Thyroid gland (tissue), 4 donors: ENCODE measurements at regions of chr19 and their contacts with region 1.

Region 1: DNA sequence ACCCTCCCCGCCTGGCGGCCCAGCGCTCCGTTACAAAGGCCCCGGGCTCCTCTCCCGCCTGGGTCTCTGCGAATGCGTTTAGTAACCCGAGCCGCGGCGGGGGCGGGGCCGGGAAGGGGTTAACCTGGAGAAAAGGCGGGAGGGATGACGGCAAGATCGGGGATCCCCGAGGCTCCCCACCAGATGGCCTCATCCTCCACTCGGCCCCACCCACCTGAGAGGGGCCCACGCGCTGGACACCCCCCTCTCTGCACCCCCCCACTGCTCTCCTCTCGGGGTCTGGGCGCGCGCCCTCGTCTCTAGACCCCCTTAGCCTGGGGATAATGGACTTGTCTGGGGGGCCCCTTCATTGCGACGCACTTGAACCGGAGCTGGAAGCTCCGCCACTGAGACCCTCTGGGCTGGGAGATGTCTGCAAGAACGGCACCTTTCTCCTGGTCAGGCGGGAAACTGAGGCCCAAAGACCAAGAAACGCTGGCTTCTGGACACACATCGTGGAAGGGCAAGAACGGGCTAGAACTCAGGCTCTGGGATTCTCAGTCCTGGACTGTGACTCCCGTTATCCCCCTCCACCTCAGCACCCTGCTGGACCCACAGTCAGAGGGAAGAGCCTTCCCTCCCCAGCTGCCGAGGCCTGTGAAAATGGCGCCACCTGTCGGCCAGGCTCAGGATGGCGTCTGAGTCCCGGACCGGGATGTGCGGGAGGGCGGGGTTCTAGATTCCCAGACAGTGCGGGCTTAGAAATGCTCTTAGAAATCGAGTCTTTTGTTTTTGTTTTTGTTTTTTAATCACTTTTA is 2.9 kb upstream of the LTBP4 start:
- DNase-seq: peak; percentile 82 to 86
- H3K4me3 ChIP-seq: no peak overlapping the region
- H3K27ac ChIP-seq: no peak overlapping the region
- H3K4me1 ChIP-seq: peaks cover 36 to 65% of the 10 kb centered on the region in 2 donors
- H3K27me3 ChIP-seq: no peaks in the 10 kb centered on the region
- CTCF ChIP-seq: peak; percentile 87 to 94 (median 93)
- POLR2A ChIP-seq: no peak

Region 2: DNA sequence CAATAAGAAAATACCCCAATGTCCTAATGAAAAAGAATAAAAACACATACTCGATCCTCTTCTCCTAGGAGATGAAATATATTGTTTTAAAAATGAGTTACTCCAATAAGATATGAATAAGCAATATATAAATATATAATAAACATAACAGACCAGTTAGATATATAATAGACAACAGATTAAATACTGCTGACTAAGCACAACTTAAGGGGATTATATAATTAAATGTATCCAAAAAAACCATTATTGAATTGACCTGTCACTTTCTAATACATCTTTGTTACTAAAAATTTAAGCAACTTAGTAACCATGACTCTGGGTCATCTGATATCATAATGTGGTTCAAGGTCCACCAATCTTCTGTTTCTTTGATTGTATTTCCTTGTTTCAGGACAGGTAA is 528.3 kb before region 1 on chr19:
- intact Hi-C with region 1: no loop called
- DNase-seq: no peak
- H3K4me3 ChIP-seq: no peak overlapping the region
- H3K27ac ChIP-seq: no peak overlapping the region
- H3K4me1 ChIP-seq: no peaks in the 10 kb centered on the region
- H3K27me3 ChIP-seq: no peaks in the 10 kb centered on the region
- CTCF ChIP-seq: no peak
- POLR2A ChIP-seq: no peak

Region 3: DNA sequence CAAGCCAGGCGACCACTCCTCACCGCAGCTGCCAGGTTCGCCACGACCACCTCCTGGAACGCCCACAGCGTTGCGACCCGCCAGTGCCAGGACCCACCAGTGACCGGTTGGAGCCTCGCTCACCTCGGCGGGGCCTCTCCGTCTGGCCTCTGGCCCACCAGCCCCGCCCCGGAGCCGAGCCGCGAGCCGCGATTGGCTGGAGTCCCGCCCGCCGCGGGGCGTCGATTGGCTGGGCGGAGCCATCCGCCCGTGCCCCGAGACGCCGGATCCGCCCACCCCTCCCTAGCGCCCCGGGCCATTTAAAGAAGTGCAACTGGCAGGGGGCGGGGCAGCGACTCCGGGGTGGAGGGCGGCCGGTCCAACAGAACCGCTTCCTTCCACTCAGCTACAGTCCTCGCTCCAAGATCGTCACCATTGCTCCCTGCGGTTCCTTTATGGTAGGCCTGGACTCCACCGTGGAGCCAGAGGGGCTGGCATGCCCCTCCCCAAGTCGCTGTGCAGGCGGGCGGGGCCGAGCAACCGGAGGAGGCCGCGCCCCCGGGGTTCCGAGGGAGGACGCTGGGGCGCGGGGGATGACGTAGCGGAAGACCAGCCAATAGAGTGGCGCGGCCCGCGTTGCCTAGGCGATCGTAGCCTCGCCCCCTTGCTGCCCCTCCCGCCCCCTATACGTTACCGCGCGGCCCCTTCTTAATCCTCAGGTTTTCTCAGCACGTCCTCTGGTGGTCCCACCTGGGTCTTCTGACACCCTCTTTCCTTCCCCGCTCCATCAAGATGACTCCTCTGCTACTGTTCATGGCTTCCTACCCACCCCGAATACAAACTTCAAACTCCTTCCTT is 153.9 kb before region 1 on chr19 and contains the start of gene SERTAD3:
- intact Hi-C with region 1: no loop called
- DNase-seq: peak; percentile 98
- H3K4me3 ChIP-seq: peak within 1 kb of the TSS; percentile 38 to 99 (median 74)
- H3K27ac ChIP-seq: peak within 1 kb of the TSS; percentile 92 to 98 (median 94)
- H3K4me1 ChIP-seq: peaks cover 8 to 28% of the 10 kb centered on the region in 2 donors
- H3K27me3 ChIP-seq: no peaks in the 10 kb centered on the region
- CTCF ChIP-seq: peak in 2 of 6 experiments; percentile 4 to 11
- POLR2A ChIP-seq: peak; percentile 92 to 99
- total RNA-seq, gene SERTAD3: 15.6 to 25.2 (median 20.4) TPM

Region 4: GRCh38 chr19:40465557-40466150 is 132.7 kb before region 1 on chr19 and contains the start of gene BLVRB:
- intact Hi-C with region 1: loop called (anchors 10 kb)
- DNase-seq: peak; percentile 100
- H3K4me3 ChIP-seq: peak within 1 kb of the TSS; percentile 55 to 80 (median 64)
- H3K27ac ChIP-seq: peak within 1 kb of the TSS; percentile 91 to 95 (median 94)
- H3K4me1 ChIP-seq: peaks cover 18 to 31% of the 10 kb centered on the region in 2 donors
- H3K27me3 ChIP-seq: no peaks in the 10 kb centered on the region
- CTCF ChIP-seq: no peak
- POLR2A ChIP-seq: peak; percentile 85 to 98
- total RNA-seq, gene BLVRB: 111 to 238 (median 205) TPM

Region 5: DNA sequence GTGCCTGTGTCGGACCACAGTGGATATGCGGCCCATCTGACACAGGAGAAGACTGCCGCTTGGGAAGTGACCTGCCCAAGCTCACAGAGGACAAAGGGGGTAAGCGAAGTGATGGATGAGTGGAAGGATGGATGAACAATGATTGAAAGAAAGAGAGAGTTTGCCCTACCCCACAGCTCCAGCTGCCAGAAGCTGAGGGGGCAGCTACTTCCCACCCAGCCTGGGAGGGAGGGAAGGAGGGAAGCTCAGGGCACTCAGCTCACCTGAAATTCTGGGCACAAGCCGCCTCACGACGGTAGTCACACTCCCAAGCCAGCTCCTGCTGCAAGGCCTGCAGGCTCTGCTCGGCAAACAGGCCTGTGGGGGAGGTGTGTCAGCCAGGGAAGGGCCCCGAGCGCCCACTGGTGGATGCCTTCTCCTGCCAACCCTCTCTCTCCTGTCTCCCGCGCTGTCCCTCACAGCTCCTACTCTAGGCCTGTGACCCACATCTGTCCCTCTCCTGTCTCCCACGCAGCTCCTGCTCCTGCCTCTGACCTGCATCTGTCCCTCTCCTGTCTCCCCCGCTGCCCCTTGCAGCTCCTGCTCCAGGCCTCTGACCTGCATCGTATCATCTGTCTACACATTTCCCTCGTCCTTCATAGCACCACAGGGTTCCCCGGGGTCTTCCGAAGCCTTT is 104.2 kb after region 1 on chr19:
- intact Hi-C with region 1: no loop called
- DNase-seq: no peak
- H3K4me3 ChIP-seq: no peak overlapping the region
- H3K27ac ChIP-seq: no peak overlapping the region
- H3K4me1 ChIP-seq: no peaks in the 10 kb centered on the region
- H3K27me3 ChIP-seq: no peaks in the 10 kb centered on the region
- CTCF ChIP-seq: no peak
- POLR2A ChIP-seq: no peak